Esophagus muscularis mucosa (tissue), 4 donors: ENCODE measurements at regions of chr11 and their contacts with region 1.

Region 1: GRCh38 chr11:61129639-61130523 is 27.6 kb downstream of the CD5 start:
- DNase-seq: peak; percentile 96
- H3K4me3 ChIP-seq: peak overlapping the region; percentile 33 to 46 (median 39)
- H3K27ac ChIP-seq: peak overlapping the region; percentile 62 to 77 (median 72)
- H3K4me1 ChIP-seq: peaks cover 12 to 37% (median 22%) of the 10 kb centered on the region in 4 donors
- H3K27me3 ChIP-seq: no peaks in the 10 kb centered on the region
- CTCF ChIP-seq: peak in 2 of 3 experiments; percentile 97 to 100
- EP300 ChIP-seq: no peak
- POLR2A ChIP-seq: no peak

Region 2: DNA sequence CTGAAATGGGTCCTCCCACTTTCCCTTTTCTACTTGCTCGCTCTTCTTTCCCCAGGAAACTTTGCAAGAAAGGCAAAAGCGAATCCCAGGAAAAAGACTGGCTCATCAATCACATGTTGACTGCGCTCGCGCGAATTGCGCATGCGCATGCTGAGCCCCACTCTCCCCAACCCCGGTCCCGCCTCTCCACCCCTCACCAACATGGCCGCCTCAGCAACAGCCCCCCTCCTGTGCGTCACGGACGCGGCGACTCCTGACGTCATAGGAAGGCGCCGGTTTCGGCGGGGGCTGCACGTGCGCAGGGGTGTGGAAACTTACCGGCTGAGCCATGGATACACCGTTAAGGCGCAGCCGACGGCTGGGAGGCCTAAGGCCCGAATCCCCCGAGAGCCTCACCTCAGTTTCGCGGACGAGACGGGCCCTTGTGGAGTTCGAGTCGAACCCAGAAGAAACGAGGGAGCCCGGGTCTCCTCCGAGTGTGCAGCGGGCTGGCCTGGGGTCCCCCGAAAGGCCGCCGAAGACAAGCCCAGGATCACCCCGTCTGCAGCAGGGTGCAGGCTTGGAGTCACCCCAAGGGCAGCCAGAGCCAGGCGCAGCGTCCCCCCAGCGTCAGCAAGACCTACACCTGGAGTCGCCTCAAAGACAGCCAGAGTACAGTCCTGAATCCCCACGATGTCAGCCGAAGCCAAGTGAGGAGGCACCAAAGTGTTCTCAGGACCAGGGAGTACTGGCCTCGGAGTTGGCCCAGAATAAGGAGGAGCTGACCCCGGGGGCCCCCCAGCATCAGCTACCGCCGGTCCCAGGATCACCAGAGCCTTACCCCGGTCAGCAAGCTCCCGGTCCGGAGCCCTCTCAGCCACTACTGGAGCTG is 287.8 kb before region 1 on chr11 and contains the start of gene CCDC86:
- intact Hi-C with region 1: loop called (anchors 5 kb)
- DNase-seq: peak; percentile 100
- H3K4me3 ChIP-seq: peak within 1 kb of the TSS; percentile 68 to 92 (median 81)
- H3K27ac ChIP-seq: peak within 1 kb of the TSS; percentile 69 to 76 (median 70)
- H3K4me1 ChIP-seq: peaks cover 40 to 54% (median 47%) of the 10 kb centered on the region in 4 donors
- H3K27me3 ChIP-seq: no peaks in the 10 kb centered on the region
- CTCF ChIP-seq: peak in 1 of 3 experiments; percentile 40
- EP300 ChIP-seq: no peak
- POLR2A ChIP-seq: no peak
- total RNA-seq, gene CCDC86: 11.6 to 29.5 (median 21.8) TPM

Region 3: DNA sequence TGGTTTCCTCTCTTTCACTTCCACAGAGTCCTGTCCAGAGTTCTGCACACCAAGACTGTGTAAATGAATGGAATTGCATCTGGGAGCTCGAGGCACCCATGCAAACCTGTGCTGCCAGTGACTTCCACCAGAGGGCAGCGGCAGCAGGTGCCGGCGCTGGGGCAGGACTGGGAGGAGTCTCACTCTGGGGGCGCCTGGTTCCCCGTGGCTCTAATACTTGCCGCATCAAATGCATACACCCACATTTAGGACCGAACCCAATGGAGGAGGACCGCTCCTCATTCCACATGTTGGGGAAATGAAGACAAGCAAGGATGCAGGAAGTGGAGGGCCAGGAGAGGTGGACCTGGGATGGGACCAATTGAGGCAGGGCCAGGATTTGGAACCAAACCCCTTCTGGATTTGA is 159.5 kb before region 1 on chr11:
- intact Hi-C with region 1: loop called (anchors 2 kb)
- DNase-seq: no peak
- H3K4me3 ChIP-seq: no peak overlapping the region
- H3K27ac ChIP-seq: no peak overlapping the region
- H3K4me1 ChIP-seq: no peaks in the 10 kb centered on the region
- H3K27me3 ChIP-seq: no peaks in the 10 kb centered on the region
- CTCF ChIP-seq: peak; percentile 81 to 90 (median 82)
- EP300 ChIP-seq: no peak
- POLR2A ChIP-seq: no peak

Region 4: GRCh38 chr11:61173456-61173855 is 43.6 kb after region 1 on chr11:
- intact Hi-C with region 1: no loop called
- DNase-seq: no peak
- H3K4me3 ChIP-seq: no peak overlapping the region
- H3K27ac ChIP-seq: no peak overlapping the region
- H3K4me1 ChIP-seq: no peaks in the 10 kb centered on the region
- H3K27me3 ChIP-seq: peaks cover 0 to 5% (median 0%) of the 10 kb centered on the region in 4 donors
- CTCF ChIP-seq: no peak
- EP300 ChIP-seq: no peak
- POLR2A ChIP-seq: no peak

Region 5: GRCh38 chr11:61187505-61188130 is 57.7 kb after region 1 on chr11:
- intact Hi-C with region 1: loop called (anchors 2 kb)
- DNase-seq: peak; percentile 94
- H3K4me3 ChIP-seq: no peak overlapping the region
- H3K27ac ChIP-seq: no peak overlapping the region
- H3K4me1 ChIP-seq: no peaks in the 10 kb centered on the region
- H3K27me3 ChIP-seq: peaks cover 0 to 31% (median 0%) of the 10 kb centered on the region in 4 donors
- CTCF ChIP-seq: peak; percentile 88 to 94 (median 91)
- EP300 ChIP-seq: no peak
- POLR2A ChIP-seq: no peak